ENCODE measurements at regions of chr4 and their contacts with region 1.

Region 1: GRCh38 chr4:97432551-97432950 is 710.7 kb downstream of the STPG2 start:
- DNase-seq: no peak
- ATAC-seq: no peak
- H3K4me3 ChIP-seq: no peak overlapping the region
- H3K27ac ChIP-seq: no peak overlapping the region
- H3K4me1 ChIP-seq: no peaks in the 10 kb centered on the region
- H3K27me3 ChIP-seq: no peaks in the 10 kb centered on the region
- CTCF ChIP-seq: no peak

Region 2: GRCh38 chr4:98101988-98102387 is 669.4 kb after region 1 on chr4:
- CTCF ChIA-PET with region 1: no interaction called
- POLR2A ChIA-PET with region 1: interaction called, 15 read pairs
- intact Hi-C with region 1: no loop called
- DNase-seq: peak; percentile 72
- ATAC-seq: peak; percentile 97
- H3K4me3 ChIP-seq: no peak overlapping the region
- H3K27ac ChIP-seq: peak overlapping the region; percentile 64
- H3K4me1 ChIP-seq: peaks cover 16% of the 10 kb centered on the region
- H3K27me3 ChIP-seq: no peaks in the 10 kb centered on the region
- CTCF ChIP-seq: no peak